ENCODE measurements at regions of chr15 and their contacts with region 1.

Region 1: GRCh38 chr15:47987908-47988532 is 132.8 kb upstream of the SLC24A5 start:
- DNase-seq: no peak
- H3K4me3 ChIP-seq: no peak overlapping the region
- H3K27ac ChIP-seq: no peak overlapping the region
- H3K4me1 ChIP-seq: no peaks in the 10 kb centered on the region
- H3K27me3 ChIP-seq: no peaks in the 10 kb centered on the region
- CTCF ChIP-seq: peak; percentile 82

Region 2: DNA sequence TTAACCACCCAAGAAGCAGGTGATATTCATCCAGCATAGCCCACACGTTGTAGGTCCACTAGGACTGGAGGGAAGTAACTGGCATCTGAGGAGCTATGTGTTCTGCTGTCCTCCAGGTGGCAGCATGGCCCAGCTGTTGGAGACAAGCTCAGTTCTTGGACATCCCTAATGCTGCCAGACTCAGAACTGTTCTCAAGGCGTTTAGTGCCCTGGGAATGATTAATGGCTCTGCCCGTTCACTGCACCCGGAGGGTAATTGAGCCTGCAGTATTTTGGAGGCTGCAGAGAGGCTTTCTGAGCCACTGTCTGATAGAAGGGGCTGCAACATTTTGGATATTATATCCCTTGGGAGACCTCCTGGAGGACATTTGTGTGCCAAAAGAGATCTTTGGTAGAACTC is 792.0 kb before region 1 on chr15:
- intact Hi-C with region 1: loop called (anchors 2 kb)
- DNase-seq: peak; percentile 67
- H3K4me3 ChIP-seq: no peak overlapping the region
- H3K27ac ChIP-seq: no peak overlapping the region
- H3K4me1 ChIP-seq: no peaks in the 10 kb centered on the region
- H3K27me3 ChIP-seq: no peaks in the 10 kb centered on the region
- CTCF ChIP-seq: peak; percentile 87

Region 3: DNA sequence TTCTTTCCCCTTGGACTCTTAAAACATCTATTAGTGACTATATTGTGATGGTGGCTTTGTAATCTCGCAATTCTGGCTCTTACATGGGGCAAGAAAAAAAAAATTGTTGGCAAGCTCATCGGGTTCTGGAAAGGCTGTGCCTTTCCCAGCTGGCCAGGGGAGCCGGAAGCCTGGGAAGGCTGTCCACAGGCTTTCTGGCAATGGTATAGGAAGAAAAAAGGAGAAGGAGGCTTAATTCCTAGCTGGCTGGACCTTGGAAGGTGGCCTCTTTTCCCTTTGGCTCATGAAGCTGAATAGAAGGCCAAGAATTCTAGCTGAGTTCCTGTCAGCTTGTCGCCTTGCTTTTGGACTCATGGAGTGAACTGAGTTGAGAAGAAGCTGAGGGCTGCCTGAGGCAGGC is 514.2 kb before region 1 on chr15:
- intact Hi-C with region 1: loop called (anchors 10 kb)
- DNase-seq: peak; percentile 61
- H3K4me3 ChIP-seq: no peak overlapping the region
- H3K27ac ChIP-seq: peak overlapping the region; percentile 63
- H3K4me1 ChIP-seq: peaks cover 30% of the 10 kb centered on the region
- H3K27me3 ChIP-seq: no peaks in the 10 kb centered on the region
- CTCF ChIP-seq: no peak

Region 4: GRCh38 chr15:47711654-47712053 is 276.4 kb before region 1 on chr15:
- intact Hi-C with region 1: loop called (anchors 5 kb)
- DNase-seq: no peak
- H3K4me3 ChIP-seq: no peak overlapping the region
- H3K27ac ChIP-seq: no peak overlapping the region
- H3K4me1 ChIP-seq: peaks cover 13% of the 10 kb centered on the region
- H3K27me3 ChIP-seq: no peaks in the 10 kb centered on the region
- CTCF ChIP-seq: peak; percentile 63